Pancreas (tissue), 10 donors: ENCODE measurements at regions of chr13 and their contacts with region 1.

Region 1: GRCh38 chr13:113029487-113030258 is 60.7 kb downstream of the MCF2L start:
- DNase-seq: peak in 3 of 6 donors; percentile 44 to 86 (median 66)
- ATAC-seq: peak; percentile 40 to 88 (median 74)
- H3K4me3 ChIP-seq: no peak overlapping the region
- H3K27ac ChIP-seq: no peak overlapping the region
- H3K4me1 ChIP-seq: no peaks in the 10 kb centered on the region
- H3K27me3 ChIP-seq: no peaks in the 10 kb centered on the region
- CTCF ChIP-seq: peak; percentile 66 to 74 (median 68)

Region 2: DNA sequence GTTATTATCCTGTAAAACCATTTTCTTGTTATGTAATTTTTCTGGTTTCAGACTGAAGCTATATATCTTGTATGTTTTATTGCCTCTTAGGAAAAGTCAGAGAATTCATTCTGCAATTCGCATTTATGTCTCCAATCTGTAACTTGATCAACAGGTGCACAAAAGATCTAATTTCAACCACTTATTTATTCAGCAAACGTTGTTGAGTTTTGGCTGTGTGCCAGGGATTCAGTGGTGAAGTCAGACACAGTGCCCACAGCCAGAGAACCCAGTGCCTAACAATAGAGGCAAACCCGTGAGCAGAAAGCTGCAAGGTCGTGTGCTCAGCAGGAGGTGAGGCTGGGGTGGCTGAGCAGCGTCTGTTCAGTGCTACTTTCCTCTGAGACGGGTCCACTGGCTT is 180.2 kb before region 1 on chr13:
- intact Hi-C with region 1: no loop called
- DNase-seq: no peak
- ATAC-seq: peak in 3 of 4 donors; percentile 11 to 46 (median 32)
- H3K4me3 ChIP-seq: no peak overlapping the region
- H3K27ac ChIP-seq: no peak overlapping the region
- H3K4me1 ChIP-seq: no peaks in the 10 kb centered on the region
- H3K27me3 ChIP-seq: no peaks in the 10 kb centered on the region
- CTCF ChIP-seq: no peak

Region 3: GRCh38 chr13:112942689-112943308 is 86.9 kb before region 1 on chr13:
- intact Hi-C with region 1: loop called in 2 of 3 experiments (anchors 5 kb)
- DNase-seq: peak; percentile 93 to 100 (median 97)
- ATAC-seq: peak; percentile 95 to 97 (median 96)
- H3K4me3 ChIP-seq: peak overlapping the region; percentile 37 to 58 (median 48)
- H3K27ac ChIP-seq: peak overlapping the region in 2 of 4 donors; percentile 19 to 35
- H3K4me1 ChIP-seq: no peaks in the 10 kb centered on the region
- H3K27me3 ChIP-seq: no peaks in the 10 kb centered on the region
- CTCF ChIP-seq: peak; percentile 96 to 97 (median 97)

Region 4: GRCh38 chr13:112959206-112959605 is 70.5 kb before region 1 on chr13:
- intact Hi-C with region 1: no loop called
- DNase-seq: peak in 1 of 6 donors; percentile 11
- ATAC-seq: no peak
- H3K4me3 ChIP-seq: no peak overlapping the region
- H3K27ac ChIP-seq: no peak overlapping the region
- H3K4me1 ChIP-seq: no peaks in the 10 kb centered on the region
- H3K27me3 ChIP-seq: no peaks in the 10 kb centered on the region
- CTCF ChIP-seq: no peak